PC-3 (cell line): ENCODE measurements at regions of chr18 and their contacts with region 1.

Region 1: GRCh38 chr18:54946149-54946581 is 13.1 kb downstream of the CCDC68 start:
- DNase-seq: peak; percentile 63
- ATAC-seq: peak; percentile 38
- H3K4me3 ChIP-seq: peak overlapping the region; percentile 78
- H3K27ac ChIP-seq: peak overlapping the region; percentile 71
- H3K4me1 ChIP-seq: peaks cover 40% of the 10 kb centered on the region
- H3K27me3 ChIP-seq: no peaks in the 10 kb centered on the region
- CTCF ChIP-seq: no peak

Region 2: GRCh38 chr18:54607215-54607934 is 338.8 kb before region 1 on chr18:
- CTCF ChIA-PET with region 1: no interaction called
- POLR2A ChIA-PET with region 1: no interaction called
- intact Hi-C with region 1: loop called (anchors 5 kb)
- DNase-seq: peak; percentile 87
- ATAC-seq: peak; percentile 65
- H3K4me3 ChIP-seq: peak overlapping the region; percentile 65
- H3K27ac ChIP-seq: peak overlapping the region; percentile 95
- H3K4me1 ChIP-seq: peaks cover 38% of the 10 kb centered on the region
- H3K27me3 ChIP-seq: no peaks in the 10 kb centered on the region
- CTCF ChIP-seq: no peak

Region 3: DNA sequence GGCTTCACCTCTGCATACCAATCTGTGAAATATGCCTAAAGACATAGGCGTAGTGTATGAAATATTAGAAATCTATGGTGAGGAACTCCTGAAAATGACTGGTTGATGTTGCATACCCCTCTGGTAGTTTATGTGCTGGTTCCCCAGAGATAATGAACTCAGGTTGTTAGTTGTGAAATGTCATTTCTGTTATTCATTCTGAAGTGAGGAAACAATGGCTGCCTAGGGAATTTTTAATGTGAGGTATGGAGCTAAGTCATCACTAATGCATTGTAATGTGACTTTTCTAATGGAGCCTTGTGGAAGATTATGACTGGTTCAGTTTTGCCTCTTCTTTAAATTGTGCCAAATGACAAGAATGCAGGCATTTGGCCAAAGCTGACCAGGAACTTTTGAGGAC is 179.5 kb before region 1 on chr18:
- CTCF ChIA-PET with region 1: no interaction called
- POLR2A ChIA-PET with region 1: no interaction called
- intact Hi-C with region 1: loop called (anchors 1 kb)
- DNase-seq: peak; percentile 75
- ATAC-seq: peak; percentile 47
- H3K4me3 ChIP-seq: peak overlapping the region; percentile 54
- H3K27ac ChIP-seq: peak overlapping the region; percentile 99
- H3K4me1 ChIP-seq: peaks cover 56% of the 10 kb centered on the region
- H3K27me3 ChIP-seq: no peaks in the 10 kb centered on the region
- CTCF ChIP-seq: no peak

Region 4: GRCh38 chr18:54805571-54806334 is 140.4 kb before region 1 on chr18:
- CTCF ChIA-PET with region 1: no interaction called
- POLR2A ChIA-PET with region 1: no interaction called
- intact Hi-C with region 1: loop called (anchors 1 kb)
- DNase-seq: peak; percentile 81
- ATAC-seq: peak; percentile 93
- H3K4me3 ChIP-seq: no peak overlapping the region
- H3K27ac ChIP-seq: peak overlapping the region; percentile 86
- H3K4me1 ChIP-seq: peaks cover 25% of the 10 kb centered on the region
- H3K27me3 ChIP-seq: no peaks in the 10 kb centered on the region
- CTCF ChIP-seq: no peak

Region 5: DNA sequence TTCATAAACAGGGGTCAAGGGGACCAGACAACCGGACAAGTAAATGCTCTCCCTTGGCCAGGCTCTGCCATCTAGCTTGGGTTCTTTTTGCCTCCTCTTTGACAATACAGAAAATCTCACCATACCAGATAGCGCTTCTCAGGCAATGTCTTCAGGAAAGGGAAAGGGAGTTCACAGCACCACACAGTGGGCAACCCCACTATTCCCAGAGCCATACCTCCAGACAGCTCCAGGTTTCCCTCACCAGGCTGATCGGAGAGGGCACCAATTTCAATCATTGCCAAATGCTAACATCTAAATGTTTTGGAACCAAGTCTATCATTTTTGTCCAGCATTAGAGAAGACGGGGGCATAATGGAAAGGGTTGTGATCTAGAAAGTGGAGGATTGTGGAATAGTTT is 15.0 kb before region 1 on chr18:
- CTCF ChIA-PET with region 1: no interaction called
- POLR2A ChIA-PET with region 1: no interaction called
- intact Hi-C with region 1: no loop called
- DNase-seq: peak; percentile 14
- ATAC-seq: peak; percentile 56
- H3K4me3 ChIP-seq: no peak overlapping the region
- H3K27ac ChIP-seq: no peak overlapping the region
- H3K4me1 ChIP-seq: no peaks in the 10 kb centered on the region
- H3K27me3 ChIP-seq: no peaks in the 10 kb centered on the region
- CTCF ChIP-seq: peak; percentile 37; the same call in 1 of the 2 replicates

Region 6: DNA sequence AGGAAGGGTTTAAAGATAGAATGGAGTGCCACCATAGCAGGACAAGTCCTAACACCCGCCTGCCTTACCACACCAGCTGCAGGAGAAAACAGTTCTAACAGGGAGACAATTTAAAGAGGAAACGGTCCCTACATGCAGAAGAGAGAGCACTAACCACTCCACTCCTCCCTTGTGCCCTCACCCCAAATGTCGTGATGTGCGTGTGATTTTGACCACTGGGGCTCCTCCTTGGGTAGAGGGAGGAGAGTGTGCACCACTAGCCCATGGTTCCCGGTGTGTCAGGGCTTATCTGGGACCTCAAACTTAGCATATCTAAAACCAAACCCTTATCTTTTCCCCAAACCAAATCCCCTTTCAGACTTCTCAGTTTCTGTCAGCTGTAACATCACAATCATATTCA is 118.6 kb after region 1 on chr18:
- CTCF ChIA-PET with region 1: no interaction called
- POLR2A ChIA-PET with region 1: no interaction called
- intact Hi-C with region 1: no loop called
- DNase-seq: no peak
- ATAC-seq: no peak
- H3K4me3 ChIP-seq: no peak overlapping the region
- H3K27ac ChIP-seq: no peak overlapping the region
- H3K4me1 ChIP-seq: peaks cover 6% of the 10 kb centered on the region; the same call in 1 of the 2 replicates
- H3K27me3 ChIP-seq: no peaks in the 10 kb centered on the region
- CTCF ChIP-seq: no peak